Heart left ventricle (tissue), 16 donors: ENCODE measurements at regions of chr16 and their contacts with region 1.

Region 1: DNA sequence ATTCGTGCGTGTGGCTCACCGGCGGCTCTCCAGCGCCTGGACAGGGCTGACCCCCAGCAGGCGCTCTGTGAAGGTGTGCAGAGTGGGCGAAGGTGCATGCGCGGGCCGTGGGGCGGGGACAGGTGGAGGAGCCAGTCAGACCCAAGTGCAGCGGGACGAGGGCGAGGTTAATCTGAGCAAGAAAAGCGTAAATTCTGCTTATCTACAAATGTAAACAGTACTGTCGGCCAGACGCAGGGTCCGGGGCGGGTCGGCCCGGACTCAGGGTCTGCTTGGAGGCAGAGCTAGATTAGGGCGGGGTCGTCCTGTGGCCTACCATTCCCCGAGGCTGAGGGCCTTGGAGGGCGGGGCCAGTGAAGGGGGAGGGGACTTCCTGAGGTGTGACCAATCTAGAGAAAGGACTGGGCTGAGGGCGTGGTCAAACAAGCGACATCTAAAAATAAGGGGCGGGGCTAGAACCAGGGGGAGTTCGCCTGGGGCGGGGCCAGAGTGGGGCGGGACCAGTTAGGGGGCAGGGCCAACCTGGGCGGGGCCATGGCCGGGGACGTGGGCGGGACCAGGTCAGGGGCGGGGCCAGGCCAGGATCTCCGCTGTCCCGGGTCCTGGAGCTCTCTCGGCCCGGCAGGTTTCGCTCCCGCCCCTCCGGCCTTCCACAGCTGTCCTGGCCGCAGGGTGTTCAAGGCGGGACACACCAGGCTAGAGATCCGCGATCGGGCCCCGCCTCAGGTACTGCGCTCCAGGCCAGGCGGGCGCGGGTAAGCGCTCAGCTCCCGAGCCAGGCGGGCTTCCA is at the start of gene SEC14L5:
- DNase-seq: peak; percentile 94 to 98 (median 97)
- ATAC-seq: peak; percentile 95 to 98 (median 96)
- H3K4me3 ChIP-seq: peak within 1 kb of the TSS in 11 of 12 donors; percentile 20 to 67 (median 54)
- H3K27ac ChIP-seq: peak within 1 kb of the TSS in 9 of 12 donors; percentile 2 to 69 (median 36)
- H3K4me1 ChIP-seq: peaks cover 0 to 17% (median 12%) of the 10 kb centered on the region in 12 donors
- H3K27me3 ChIP-seq: peaks cover 0 to 9% (median 0%) of the 10 kb centered on the region in 9 donors
- CTCF ChIP-seq: no peak
- POLR2A ChIP-seq: no peak
- total RNA-seq, gene SEC14L5: 1.6 to 25.4 (median 11.6) TPM

Region 2: GRCh38 chr16:4511441-4512082 is 446.4 kb before region 1 on chr16:
- intact Hi-C with region 1: loop called in 8 of 10 experiments (anchors 5 to 10 kb)
- DNase-seq: peak in 4 of 5 donors; percentile 52 to 73 (median 66)
- ATAC-seq: peak; percentile 39 to 71 (median 63)
- H3K4me3 ChIP-seq: no peak overlapping the region
- H3K27ac ChIP-seq: peak overlapping the region in 11 of 12 donors; percentile 14 to 81 (median 60)
- H3K4me1 ChIP-seq: peaks cover 0 to 61% (median 51%) of the 10 kb centered on the region in 12 donors
- H3K27me3 ChIP-seq: no peaks in the 10 kb centered on the region
- CTCF ChIP-seq: peak; percentile 33 to 66 (median 55)
- POLR2A ChIP-seq: no peak

Region 3: GRCh38 chr16:4624015-4624826 is 333.7 kb before region 1 on chr16 and contains the start of gene MGRN1:
- intact Hi-C with region 1: loop called in 2 of 10 experiments (anchors 5 to 10 kb)
- DNase-seq: peak; percentile 94 to 97 (median 97)
- ATAC-seq: peak; percentile 98 to 99 (median 98)
- H3K4me3 ChIP-seq: peak within 1 kb of the TSS; percentile 70 to 100 (median 98)
- H3K27ac ChIP-seq: peak within 1 kb of the TSS; percentile 84 to 99 (median 94)
- H3K4me1 ChIP-seq: peaks cover 0 to 28% (median 16%) of the 10 kb centered on the region in 12 donors
- H3K27me3 ChIP-seq: no peaks in the 10 kb centered on the region
- CTCF ChIP-seq: peak; percentile 86 to 99 (median 92)
- POLR2A ChIP-seq: no peak
- total RNA-seq, gene MGRN1: 28.5 to 75.0 (median 42.0) TPM

Region 4: DNA sequence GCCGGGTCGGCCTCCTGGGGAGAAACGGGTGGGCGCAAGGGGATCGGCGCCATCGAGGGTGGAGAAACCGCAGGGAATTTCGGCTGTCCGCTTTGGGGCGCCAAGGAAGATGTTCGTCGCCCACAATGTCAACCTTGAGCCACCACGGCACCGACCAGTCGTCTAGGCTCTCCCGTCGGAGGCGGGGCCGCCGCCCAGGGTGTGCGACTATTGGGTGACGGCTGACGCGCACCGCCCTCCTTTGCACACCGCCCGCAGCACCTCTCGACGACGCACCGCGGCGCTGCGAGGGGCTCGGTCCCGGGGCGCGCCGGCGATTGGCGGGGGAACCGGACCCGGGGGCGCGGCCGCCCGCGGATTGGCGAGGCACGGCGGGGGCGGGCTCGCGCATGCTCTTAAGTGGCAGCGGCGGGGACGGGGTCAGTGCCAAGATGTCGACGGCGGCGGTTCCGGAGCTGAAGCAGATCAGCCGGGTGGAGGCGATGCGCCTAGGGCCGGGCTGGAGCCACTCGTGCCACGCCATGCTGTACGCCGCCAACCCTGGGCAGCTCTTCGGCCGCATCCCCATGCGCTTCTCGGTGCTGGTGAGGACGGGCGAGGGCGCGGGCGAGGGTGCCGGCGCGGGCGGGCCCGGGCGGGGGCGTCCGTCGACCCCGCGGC is 264.5 kb before region 1 on chr16 and contains the start of gene NUDT16L1:
- intact Hi-C with region 1: loop called in 2 of 10 experiments (anchors 10 kb)
- DNase-seq: peak; percentile 97 to 99 (median 98)
- ATAC-seq: peak; percentile 86 to 95 (median 90)
- H3K4me3 ChIP-seq: peak within 1 kb of the TSS; percentile 72 to 100 (median 96)
- H3K27ac ChIP-seq: peak within 1 kb of the TSS; percentile 61 to 96 (median 88)
- H3K4me1 ChIP-seq: peaks cover 5 to 46% (median 26%) of the 10 kb centered on the region in 12 donors
- H3K27me3 ChIP-seq: no peaks in the 10 kb centered on the region
- CTCF ChIP-seq: peak in 10 of 12 donors; percentile 13 to 62 (median 40)
- POLR2A ChIP-seq: peak; percentile 13 to 80
- total RNA-seq, gene NUDT16L1: 33.1 to 65.2 (median 46.4) TPM

Region 5: GRCh38 chr16:4766874-4767628 is 190.9 kb before region 1 on chr16 and contains the start of gene ZNF500:
- intact Hi-C with region 1: loop called in 1 of 10 experiments (anchors 10 kb)
- DNase-seq: peak; percentile 98 to 99 (median 98)
- ATAC-seq: peak; percentile 92 to 97 (median 96)
- H3K4me3 ChIP-seq: peak within 1 kb of the TSS; percentile 76 to 97 (median 89)
- H3K27ac ChIP-seq: peak within 1 kb of the TSS; percentile 45 to 90 (median 88)
- H3K4me1 ChIP-seq: peaks cover 9 to 37% (median 32%) of the 10 kb centered on the region in 12 donors
- H3K27me3 ChIP-seq: no peaks in the 10 kb centered on the region
- CTCF ChIP-seq: no peak
- POLR2A ChIP-seq: peak in 1 of 2 donors; percentile 82
- total RNA-seq, gene ZNF500: 4.8 to 11.6 (median 6.5) TPM

Region 6: GRCh38 chr16:4846891-4847773 is 110.8 kb before region 1 on chr16 and contains the starts of genes GLYR1 and UBN1:
- intact Hi-C with region 1: loop called in 2 of 10 experiments (anchors 5 to 10 kb)
- DNase-seq: peak; percentile 100
- ATAC-seq: peak; percentile 96 to 98 (median 97)
- H3K4me3 ChIP-seq: peak within 1 kb of the TSS; percentile 67 to 99 (median 90)
- H3K27ac ChIP-seq: peak within 1 kb of the TSS; percentile 88 to 99 (median 96)
- H3K4me1 ChIP-seq: peaks cover 0 to 66% (median 47%) of the 10 kb centered on the region in 12 donors
- H3K27me3 ChIP-seq: no peaks in the 10 kb centered on the region
- CTCF ChIP-seq: no peak
- POLR2A ChIP-seq: peak; percentile 34 to 91
- total RNA-seq, gene GLYR1: 54.3 to 96.6 (median 75.8) TPM
- total RNA-seq, gene UBN1: 25.0 to 77.9 (median 32.7) TPM

Region 7: DNA sequence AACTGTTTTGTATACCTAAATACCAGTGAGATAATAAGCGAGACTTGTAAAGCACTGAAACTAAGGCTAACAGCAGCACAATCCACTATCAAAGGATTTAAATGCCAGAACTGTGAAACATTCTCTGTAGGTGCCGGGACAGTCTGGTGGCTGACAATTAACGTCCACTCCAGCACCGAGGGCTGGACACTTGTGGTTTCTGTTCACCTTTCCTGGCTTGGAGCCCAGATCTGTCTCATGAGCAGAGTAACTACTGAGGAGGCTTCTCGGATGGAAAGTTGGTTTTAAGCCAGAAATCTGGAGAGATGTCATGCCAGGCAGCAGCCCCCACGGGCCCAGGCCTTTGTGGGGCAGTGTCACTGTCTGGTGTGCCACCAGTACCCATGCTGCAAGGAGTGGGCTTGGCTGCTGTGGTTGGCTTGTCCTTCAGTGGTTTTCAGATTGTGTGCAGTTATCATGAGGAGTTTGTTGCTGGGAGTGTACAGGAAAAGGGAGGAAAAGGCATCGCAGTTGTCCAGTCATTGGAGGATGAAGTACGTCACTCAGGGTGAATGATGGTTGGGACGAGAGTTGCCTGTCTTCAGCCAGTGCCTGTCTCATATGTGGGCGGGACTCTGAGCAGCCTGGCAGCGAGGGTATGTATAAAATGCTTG is 75.2 kb before region 1 on chr16:
- intact Hi-C with region 1: no loop called
- DNase-seq: peak in 4 of 5 donors; percentile 43 to 71 (median 54)
- ATAC-seq: peak; percentile 71 to 85 (median 78)
- H3K4me3 ChIP-seq: no peak overlapping the region
- H3K27ac ChIP-seq: peak overlapping the region in 6 of 12 donors; percentile 13 to 67 (median 34)
- H3K4me1 ChIP-seq: peaks cover 0 to 18% (median 11%) of the 10 kb centered on the region in 12 donors
- H3K27me3 ChIP-seq: no peaks in the 10 kb centered on the region
- CTCF ChIP-seq: no peak
- POLR2A ChIP-seq: no peak

Region 8: DNA sequence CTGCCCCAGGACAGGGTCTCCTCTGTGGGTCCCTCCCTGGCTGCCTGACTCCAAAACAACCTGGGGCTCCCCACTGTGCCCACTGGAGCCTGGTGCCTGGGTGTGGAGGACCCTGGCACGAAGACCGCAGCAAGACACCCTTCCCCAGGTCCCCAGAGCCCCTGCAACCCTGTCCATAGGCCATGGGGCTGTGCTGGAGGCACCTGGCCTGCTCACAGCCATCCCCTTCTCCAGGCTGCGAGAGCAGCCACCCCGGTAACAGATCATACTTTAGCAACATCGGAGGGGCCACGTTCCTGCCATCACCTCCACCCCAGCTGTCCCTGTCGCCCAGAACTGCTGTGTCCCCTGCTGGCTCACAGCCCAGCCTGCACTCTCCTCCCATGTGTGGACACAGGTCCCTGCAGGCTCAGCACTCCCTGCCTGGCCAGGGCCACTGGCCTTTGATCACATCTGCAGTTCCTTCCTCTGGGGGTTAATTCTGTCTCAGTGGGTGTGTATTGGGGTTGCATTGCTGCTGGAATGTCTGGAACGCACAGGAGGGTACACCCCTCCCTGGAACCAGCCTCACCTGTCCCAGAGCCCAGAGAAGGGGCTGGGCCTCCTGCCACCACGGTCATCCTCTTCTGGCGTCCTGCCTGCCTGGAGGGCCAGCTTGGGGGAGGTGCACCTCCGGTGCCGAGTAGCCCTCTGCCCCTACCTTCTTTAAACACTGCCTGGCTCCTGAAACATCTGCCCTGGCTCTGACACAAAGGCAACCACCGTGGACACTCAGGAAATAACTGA is 33.1 kb before region 1 on chr16:
- intact Hi-C with region 1: no loop called
- DNase-seq: no peak
- ATAC-seq: peak in 3 of 4 donors; percentile 22 to 36 (median 34)
- H3K4me3 ChIP-seq: no peak overlapping the region
- H3K27ac ChIP-seq: no peak overlapping the region
- H3K4me1 ChIP-seq: peaks cover 0 to 7% (median 0%) of the 10 kb centered on the region in 12 donors
- H3K27me3 ChIP-seq: no peaks in the 10 kb centered on the region
- CTCF ChIP-seq: no peak
- POLR2A ChIP-seq: no peak

Region 9: DNA sequence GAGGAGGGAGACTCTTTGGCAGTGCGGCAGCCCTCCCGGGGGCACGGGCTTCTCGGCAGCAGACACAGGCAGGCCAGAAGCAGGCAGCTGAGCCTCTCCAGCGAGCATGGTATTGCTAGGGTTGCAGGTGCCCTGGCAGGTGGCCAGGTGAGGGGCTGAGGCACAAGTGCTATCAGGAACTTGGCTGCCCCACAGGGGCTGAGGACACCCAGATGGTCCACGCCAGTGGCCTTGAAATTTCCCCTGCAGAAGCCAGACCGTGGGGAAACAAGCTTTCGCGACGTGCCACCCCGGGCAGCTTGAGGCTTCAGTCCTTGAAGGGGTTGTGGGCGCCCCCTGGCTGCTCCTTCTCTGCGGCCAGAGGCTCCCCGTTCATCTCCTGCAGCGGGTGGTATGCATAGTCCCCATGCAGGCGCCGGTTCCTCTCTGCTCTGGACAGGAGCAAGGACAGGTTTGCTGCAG is 67.3 kb after region 1 on chr16:
- intact Hi-C with region 1: loop called in 3 of 10 experiments (anchors 5 to 10 kb)
- DNase-seq: peak in 2 of 5 donors; percentile 31 to 61
- ATAC-seq: peak in 3 of 4 donors; percentile 39 to 64 (median 58)
- H3K4me3 ChIP-seq: no peak overlapping the region
- H3K27ac ChIP-seq: no peak overlapping the region
- H3K4me1 ChIP-seq: peaks cover 0 to 9% (median 0%) of the 10 kb centered on the region in 12 donors
- H3K27me3 ChIP-seq: no peaks in the 10 kb centered on the region
- CTCF ChIP-seq: peak in 9 of 12 donors; percentile 7 to 56 (median 25)
- POLR2A ChIP-seq: no peak